Heart right ventricle (tissue), 16 donors: ENCODE measurements at regions of chr17 and their contacts with region 1.

Region 1: GRCh38 chr17:15409721-15410250 is 57.6 kb downstream of the CDRT4 start:
- DNase-seq: peak in 1 of 2 donors; percentile 37
- ATAC-seq: peak; percentile 59 to 76 (median 70)
- H3K4me3 ChIP-seq: peak overlapping the region in 4 of 10 donors; percentile 13 to 16 (median 14)
- H3K27ac ChIP-seq: peak overlapping the region; percentile 48 to 81 (median 74)
- H3K4me1 ChIP-seq: peaks cover 3 to 47% (median 20%) of the 10 kb centered on the region in 9 donors
- H3K27me3 ChIP-seq: no peaks in the 10 kb centered on the region
- CTCF ChIP-seq: no peak

Region 2: DNA sequence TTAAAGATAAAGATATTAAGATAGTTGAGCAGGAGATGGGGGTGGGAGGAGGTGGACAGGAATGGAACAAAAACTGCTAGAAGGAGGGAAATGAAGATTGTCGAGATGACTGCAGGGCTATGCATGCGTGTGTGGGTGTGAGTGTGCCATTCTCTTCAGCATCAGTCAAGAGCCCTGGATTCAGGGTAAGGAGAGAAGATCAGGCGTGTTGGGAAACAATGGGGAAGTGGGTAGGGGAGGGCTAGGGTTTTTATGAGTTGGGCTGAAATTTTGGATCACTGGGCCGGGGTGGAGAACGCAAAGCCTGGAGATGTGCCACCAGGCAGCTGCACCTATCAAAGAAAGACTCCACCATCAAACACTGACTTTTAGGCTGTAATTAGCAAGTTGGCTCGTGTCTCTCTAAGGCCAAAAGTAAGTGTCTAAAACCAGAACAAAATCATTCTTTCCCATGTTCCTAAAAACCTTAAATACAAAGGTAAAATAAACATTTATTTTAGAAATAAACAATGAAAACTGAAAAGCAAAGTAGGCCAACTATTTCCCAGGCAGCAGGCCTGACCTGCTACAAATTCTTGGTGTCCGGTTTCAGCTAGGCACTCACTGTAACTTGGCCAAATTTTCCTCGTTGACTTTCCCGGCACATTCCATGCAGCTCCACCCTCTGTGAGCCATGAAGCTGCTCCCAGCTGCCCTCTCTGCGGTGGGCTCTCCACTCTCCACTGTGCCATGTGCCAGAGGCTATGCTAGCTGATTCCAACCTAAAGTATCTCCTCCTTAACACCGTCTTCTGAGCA is 53.4 kb after region 1 on chr17:
- intact Hi-C with region 1: loop called in 2 of 10 experiments (anchors 5 kb)
- DNase-seq: peak in 1 of 2 donors; percentile 40
- ATAC-seq: peak; percentile 68 to 86 (median 82)
- H3K4me3 ChIP-seq: no peak overlapping the region
- H3K27ac ChIP-seq: peak overlapping the region in 9 of 10 donors; percentile 2 to 77 (median 61)
- H3K4me1 ChIP-seq: peaks cover 1 to 38% (median 25%) of the 10 kb centered on the region in 9 donors
- H3K27me3 ChIP-seq: no peaks in the 10 kb centered on the region
- CTCF ChIP-seq: no peak